AG04450 (cell line): ENCODE measurements at regions of chr9 and their contacts with region 1.

Region 1: DNA sequence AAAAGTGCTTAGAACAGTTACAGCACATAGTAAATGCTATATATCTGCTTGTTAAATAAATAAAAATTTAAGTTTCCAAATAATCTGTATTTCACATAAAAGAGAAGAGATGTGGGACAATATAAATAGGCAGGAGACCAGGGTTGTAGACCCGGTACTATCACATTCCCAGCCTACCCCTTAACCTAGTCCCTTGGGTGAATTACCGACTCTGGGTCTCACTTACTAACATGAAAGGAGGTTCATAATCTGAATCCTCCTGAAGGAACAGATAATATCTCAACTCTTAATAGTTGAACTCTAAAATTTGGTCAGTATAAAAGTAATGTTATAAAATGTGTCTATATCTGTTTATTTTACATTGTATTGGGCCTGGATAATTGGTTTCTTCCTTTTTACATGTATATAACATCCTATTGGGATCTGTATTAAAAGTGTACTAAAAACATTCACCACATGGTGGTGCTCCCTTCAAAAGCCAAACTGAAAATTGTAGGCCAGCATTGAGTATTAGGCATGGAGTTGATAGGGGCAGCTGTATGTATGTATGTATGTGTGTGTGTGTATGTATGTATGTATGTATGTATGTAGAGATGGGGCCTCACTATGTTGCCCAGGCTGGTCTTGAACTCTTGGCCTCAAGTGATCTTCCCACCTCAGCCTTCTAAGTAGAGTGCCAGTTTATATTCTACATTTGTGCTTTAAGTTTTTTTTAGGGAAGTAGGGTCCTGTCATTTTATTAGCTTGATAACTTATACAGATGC is 64.2 kb upstream of the ABL1 start:
- DNase-seq: peak; percentile 44
- H3K4me3 ChIP-seq: no peak overlapping the region
- H3K27ac ChIP-seq: no peak overlapping the region
- H3K27me3 ChIP-seq: no peaks in the 10 kb centered on the region
- CTCF ChIP-seq: peak; percentile 71

Region 2: DNA sequence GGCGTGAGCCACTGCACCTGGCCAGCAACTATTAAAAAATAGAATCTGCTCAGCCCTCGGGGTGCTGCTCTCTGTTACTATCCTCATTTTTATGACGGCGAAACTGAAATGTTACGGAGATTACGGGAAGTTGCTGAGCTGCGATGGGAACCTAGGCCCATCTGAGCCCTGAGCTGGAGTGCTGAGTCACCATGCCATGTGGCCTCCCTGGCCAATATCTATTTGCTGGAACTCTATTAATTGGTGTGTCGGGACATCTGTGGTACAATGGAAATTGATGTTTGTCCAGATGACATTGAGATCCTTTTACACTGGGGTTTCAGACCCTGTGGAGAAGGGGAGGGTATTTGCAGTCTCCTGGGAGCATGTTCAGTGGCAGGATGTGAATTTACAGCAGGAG is 98.4 kb before region 1 on chr9:
- CTCF ChIA-PET with region 1: no interaction called
- POLR2A ChIA-PET with region 1: no interaction called
- DNase-seq: no peak
- H3K4me3 ChIP-seq: no peak overlapping the region
- H3K27ac ChIP-seq: peak overlapping the region; percentile 11
- H3K27me3 ChIP-seq: peaks cover 26% of the 10 kb centered on the region
- CTCF ChIP-seq: no peak

Region 3: GRCh38 chr9:130846487-130847326 is 75.8 kb after region 1 on chr9:
- CTCF ChIA-PET with region 1: interaction called, 11 read pairs
- POLR2A ChIA-PET with region 1: interaction called, 4 read pairs
- DNase-seq: no peak
- H3K4me3 ChIP-seq: peak overlapping the region; percentile 46
- H3K27ac ChIP-seq: peak overlapping the region; percentile 98
- H3K27me3 ChIP-seq: no peaks in the 10 kb centered on the region
- CTCF ChIP-seq: no peak

Region 4: GRCh38 chr9:130857864-130858738 is 87.2 kb after region 1 on chr9:
- CTCF ChIA-PET with region 1: interaction called, 121 read pairs
- POLR2A ChIA-PET with region 1: no interaction called
- DNase-seq: peak; percentile 82
- H3K4me3 ChIP-seq: 0 out of 2 replicates have a peak overlapping the region, but pooled peaks have one; percentile 7
- H3K27ac ChIP-seq: peak overlapping the region; percentile 94
- H3K27me3 ChIP-seq: no peaks in the 10 kb centered on the region
- CTCF ChIP-seq: no peak

Region 5: DNA sequence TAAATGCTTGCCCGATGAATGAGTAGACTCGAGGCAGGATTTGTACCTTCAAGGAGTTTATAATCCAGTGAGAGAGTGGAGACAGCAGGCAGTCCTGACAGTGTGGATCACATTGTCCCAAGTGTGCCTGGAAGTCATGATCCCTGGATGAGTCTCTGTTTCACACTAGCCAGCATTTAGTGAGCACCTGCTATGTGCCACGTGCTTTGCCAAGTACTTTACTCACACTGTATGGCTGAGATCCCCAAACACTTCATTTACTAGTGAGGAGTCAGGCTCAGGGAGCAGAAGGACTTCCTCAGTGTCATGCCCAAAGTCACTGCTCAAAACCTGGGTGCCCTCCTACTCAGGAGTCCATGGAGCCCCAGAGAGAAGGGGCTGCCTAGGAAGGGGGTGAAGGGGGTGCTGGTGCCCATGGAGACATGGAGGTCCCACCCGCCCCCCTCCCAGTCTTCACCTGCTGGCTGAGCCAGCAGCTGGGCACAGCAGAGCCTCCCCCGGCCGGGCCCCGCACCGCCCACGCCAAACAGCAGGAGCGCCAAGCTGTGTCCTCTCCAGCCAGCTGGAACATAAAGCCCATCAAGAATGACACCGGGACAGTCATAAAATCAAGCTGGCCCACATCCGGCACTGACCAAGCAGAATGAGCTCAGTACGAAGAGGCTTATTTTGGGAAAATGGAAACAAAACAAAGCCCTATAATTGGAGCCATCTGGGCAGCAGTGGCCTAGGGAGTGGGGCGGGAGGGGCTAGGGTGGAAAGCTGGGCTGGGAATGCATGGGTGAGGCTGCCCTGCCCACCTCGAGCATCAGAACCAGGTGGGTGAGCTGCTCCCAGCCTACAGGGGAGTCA is 248.8 kb after region 1 on chr9:
- CTCF ChIA-PET with region 1: no interaction called
- POLR2A ChIA-PET with region 1: no interaction called
- DNase-seq: no peak
- H3K4me3 ChIP-seq: no peak overlapping the region
- H3K27ac ChIP-seq: no peak overlapping the region
- H3K27me3 ChIP-seq: peaks cover 50% of the 10 kb centered on the region
- CTCF ChIP-seq: no peak